RWPE1 (cell line): ENCODE measurements at regions of chr17 and their contacts with region 1.

Region 1: GRCh38 chr17:78142114-78142861 is 3.9 kb upstream of the C17orf99 start:
- DNase-seq: peak; percentile 88
- H3K27ac ChIP-seq: peak overlapping the region; percentile 92
- CTCF ChIP-seq: no peak

Region 2: DNA sequence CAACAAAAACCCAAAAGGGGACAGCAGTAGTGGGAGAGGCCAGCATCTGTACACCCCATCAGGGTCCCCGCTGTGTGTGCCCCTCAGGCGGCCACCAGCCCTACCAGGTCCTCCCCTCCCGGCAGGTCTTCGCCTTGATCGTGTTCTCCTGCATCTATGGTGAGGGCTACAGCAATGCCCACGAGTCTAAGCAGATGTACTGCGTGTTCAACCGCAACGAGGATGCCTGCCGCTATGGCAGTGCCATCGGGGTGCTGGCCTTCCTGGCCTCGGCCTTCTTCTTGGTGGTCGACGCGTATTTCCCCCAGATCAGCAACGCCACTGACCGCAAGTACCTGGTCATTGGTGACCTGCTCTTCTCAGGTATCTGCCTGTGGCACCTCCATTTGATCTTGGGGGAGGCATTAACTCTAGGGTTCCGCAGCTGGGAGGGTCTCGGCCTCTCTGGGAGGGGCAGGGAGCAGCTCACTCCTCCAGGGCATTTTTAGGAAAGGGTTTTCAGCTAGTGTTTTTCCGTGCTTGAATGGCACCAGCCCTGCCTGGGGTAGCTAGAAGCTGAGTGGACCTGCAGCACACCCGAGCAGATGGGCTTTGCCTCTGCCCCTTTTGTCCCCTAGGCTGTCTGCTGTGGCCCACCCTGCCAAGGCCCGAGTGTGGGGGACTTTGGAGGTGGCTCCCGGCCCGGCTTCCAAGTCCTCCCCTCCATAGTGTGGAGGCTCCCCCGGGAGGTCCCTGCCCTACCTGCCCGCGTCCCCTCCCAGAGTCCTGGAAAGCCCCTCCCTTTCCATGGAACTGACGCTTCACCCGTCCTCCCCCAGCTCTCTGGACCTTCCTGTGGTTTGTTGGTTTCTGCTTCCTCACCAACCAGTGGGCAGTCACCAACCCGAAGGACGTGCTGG is 28.7 kb after region 1 on chr17:
- CTCF ChIA-PET with region 1: no interaction called
- POLR2A ChIA-PET with region 1: interaction called, 16 read pairs
- DNase-seq: no peak
- H3K27ac ChIP-seq: peak overlapping the region; percentile 67
- CTCF ChIP-seq: no peak